ENCODE measurements at regions of chr14 and their contacts with region 1.

Region 1: GRCh38 chr14:103594265-103594664 is 31.5 kb downstream of the COA8 start:
- DNase-seq: peak; percentile 91 to 100
- H3K4me3 ChIP-seq: peak overlapping the region; percentile 9; the same call in 1 of the 2 replicates
- H3K27ac ChIP-seq: peak overlapping the region; percentile 77
- H3K4me1 ChIP-seq: peaks cover 42% of the 10 kb centered on the region
- H3K27me3 ChIP-seq: no peaks in the 10 kb centered on the region
- CTCF ChIP-seq: no peak

Region 2: GRCh38 chr14:103504991-103505565 is 89.2 kb before region 1 on chr14:
- CTCF ChIA-PET with region 1: no interaction called
- POLR2A ChIA-PET with region 1: no interaction called
- intact Hi-C with region 1: no loop called
- DNase-seq: no peak
- H3K4me3 ChIP-seq: no peak overlapping the region
- H3K27ac ChIP-seq: no peak overlapping the region
- H3K4me1 ChIP-seq: no peaks in the 10 kb centered on the region
- H3K27me3 ChIP-seq: no peaks in the 10 kb centered on the region
- CTCF ChIP-seq: peak; percentile 34; the same call in 1 of the 2 replicates

Region 3: DNA sequence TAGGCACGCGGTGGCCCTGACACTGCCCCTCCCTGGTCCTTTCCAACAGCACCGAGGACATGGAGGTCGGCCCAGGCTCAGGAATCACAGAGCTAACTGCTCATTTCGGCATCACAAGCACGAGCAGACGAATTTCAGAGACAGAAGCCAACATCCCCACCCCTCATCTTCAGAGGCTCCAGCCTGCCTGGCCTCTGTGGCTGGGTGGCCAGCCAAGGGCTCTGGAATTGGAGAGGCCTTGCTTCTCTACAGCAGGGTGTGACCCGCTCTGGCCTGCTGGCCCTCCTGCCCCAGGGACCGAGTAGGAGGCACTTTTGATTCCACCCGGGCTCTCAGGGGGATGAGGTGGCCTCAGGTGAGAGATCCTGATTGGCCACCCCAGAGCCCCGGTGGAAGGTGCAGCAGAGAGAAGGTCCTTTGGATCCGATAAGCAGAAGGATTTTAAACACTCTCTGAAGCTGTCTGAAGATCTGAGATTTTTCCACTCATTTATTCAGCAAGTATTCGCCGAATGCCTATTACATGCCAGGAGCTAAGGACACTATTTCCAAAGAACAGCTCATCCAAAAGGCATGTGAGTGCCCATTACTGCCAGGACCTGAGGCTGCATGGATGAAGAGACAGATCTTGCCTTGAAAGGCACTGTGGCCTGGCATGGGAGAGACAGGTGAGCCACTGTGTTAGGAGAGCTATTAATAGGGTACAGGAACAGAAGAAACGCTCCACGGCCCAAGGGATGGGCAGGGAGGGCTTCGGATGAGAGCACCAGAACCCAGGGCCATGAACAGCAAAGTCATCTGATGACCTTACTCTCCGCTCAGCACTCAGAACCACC is 42.0 kb before region 1 on chr14:
- CTCF ChIA-PET with region 1: no interaction called
- POLR2A ChIA-PET with region 1: interaction called, 23 read pairs
- intact Hi-C with region 1: no loop called
- DNase-seq: peak; percentile 73 to 78
- H3K4me3 ChIP-seq: no peak overlapping the region
- H3K27ac ChIP-seq: 0 out of 2 replicates have a peak overlapping the region, but pooled peaks have one; percentile 1
- H3K4me1 ChIP-seq: peaks cover 12% of the 10 kb centered on the region; the same call in 1 of the 2 replicates
- H3K27me3 ChIP-seq: no peaks in the 10 kb centered on the region
- CTCF ChIP-seq: no peak

Region 4: DNA sequence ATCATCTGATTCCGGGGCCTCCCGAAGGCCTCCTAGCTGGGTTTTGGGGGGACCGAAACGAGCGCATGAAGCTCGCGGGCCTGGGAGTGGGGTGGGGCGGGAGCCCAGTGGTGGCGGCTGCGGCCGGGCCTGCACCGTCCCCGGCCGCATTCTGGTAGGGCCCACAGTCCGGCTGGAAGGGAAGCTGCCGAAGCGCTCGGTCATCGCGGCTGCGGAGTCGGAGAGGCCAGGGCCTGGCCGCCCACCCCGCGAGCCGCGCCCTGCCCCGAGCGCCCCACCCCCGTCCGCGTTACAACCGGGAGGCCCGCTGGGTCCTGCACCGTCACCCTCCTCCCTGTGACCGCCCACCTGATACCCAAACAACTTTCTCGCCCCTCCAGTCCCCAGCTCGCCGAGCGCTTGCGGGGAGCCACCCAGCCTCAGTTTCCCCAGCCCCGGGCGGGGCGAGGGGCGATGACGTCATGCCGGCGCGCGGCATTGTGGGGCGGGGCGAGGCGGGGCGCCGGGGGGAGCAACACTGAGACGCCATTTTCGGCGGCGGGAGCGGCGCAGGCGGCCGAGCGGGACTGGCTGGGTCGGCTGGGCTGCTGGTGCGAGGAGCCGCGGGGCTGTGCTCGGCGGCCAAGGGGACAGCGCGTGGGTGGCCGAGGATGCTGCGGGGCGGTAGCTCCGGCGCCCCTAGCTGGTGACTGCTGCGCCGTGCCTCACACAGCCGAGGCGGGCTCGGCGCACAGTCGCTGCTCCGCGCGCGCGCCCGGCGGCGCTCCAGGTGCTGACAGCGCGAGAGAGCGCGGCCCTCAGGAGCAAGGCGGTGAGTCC is 34.6 kb after region 1 on chr14 and contains the start of gene KLC1:
- CTCF ChIA-PET with region 1: no interaction called
- POLR2A ChIA-PET with region 1: interaction called, 3 read pairs
- intact Hi-C with region 1: loop called (anchors 1 kb)
- DNase-seq: peak; percentile 57 to 90
- H3K4me3 ChIP-seq: peak within 1 kb of the TSS; percentile 81
- H3K27ac ChIP-seq: peak within 1 kb of the TSS; percentile 92
- H3K4me1 ChIP-seq: peaks cover 50% of the 10 kb centered on the region
- H3K27me3 ChIP-seq: no peaks in the 10 kb centered on the region
- CTCF ChIP-seq: no peak
- total RNA-seq, gene KLC1: 254 and 331 TPM in 2 replicates

Region 5: DNA sequence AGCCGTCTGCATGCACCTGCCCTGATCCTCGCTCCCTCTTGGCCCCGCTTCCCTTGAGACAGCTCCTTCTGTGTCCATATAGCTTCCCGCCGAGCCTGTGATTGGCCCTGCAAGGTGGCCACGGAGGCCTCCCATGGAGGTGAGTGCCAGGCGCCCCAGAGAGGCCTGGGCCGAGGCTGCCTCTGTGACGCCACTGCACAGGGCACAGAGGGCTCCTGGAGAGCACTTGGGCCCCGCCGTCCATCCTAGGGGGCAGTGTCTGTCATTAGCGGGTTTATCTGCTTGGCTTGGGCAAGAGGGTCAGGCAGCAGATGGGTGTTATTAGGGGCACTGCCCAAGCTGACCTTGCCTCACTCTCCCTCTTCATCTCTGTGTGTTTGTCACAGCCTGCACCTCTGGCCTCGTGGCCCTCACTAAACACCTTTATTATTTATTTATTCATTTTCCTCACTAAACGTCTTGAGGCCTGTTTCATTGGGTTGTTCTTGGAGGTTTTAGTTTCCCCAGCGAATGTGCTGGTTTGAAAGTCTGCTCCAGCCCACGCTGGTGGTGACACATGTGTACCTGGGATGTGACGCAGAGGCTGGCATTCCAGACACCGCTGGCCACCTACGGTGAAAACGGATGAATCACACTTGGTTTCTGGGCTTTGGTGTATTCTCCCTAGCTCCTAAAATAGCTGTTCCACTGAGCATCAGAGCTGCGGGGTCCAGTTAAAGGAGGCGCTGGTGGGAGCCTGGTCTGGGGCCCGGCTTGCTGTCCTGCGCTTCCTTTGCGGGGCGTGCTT is 127.3 kb after region 1 on chr14:
- CTCF ChIA-PET with region 1: interaction called, 8 read pairs
- POLR2A ChIA-PET with region 1: interaction called, 17 read pairs
- intact Hi-C with region 1: no loop called
- DNase-seq: peak; percentile 74 to 88
- H3K4me3 ChIP-seq: no peak overlapping the region
- H3K27ac ChIP-seq: peak overlapping the region; percentile 34
- H3K4me1 ChIP-seq: peaks cover 23% of the 10 kb centered on the region
- H3K27me3 ChIP-seq: no peaks in the 10 kb centered on the region
- CTCF ChIP-seq: no peak; the same call in 1 of the 2 replicates

Region 6: GRCh38 chr14:104968153-104968527 is 1373.9 kb after region 1 on chr14:
- CTCF ChIA-PET with region 1: no interaction called
- POLR2A ChIA-PET with region 1: interaction called, 30 read pairs
- intact Hi-C with region 1: no loop called
- DNase-seq: peak in 1 of 2 experiments; percentile 76
- H3K4me3 ChIP-seq: no peak overlapping the region
- H3K27ac ChIP-seq: no peak overlapping the region
- H3K4me1 ChIP-seq: peaks cover 48% of the 10 kb centered on the region
- H3K27me3 ChIP-seq: no peaks in the 10 kb centered on the region
- CTCF ChIP-seq: no peak